Head of caudate nucleus (tissue), 42 donors: ENCODE measurements at regions of chr2 and their contacts with region 1.

Region 1: GRCh38 chr2:42928692-42929545 is 136.5 kb upstream of the HAAO start:
- DNase-seq: no peak

Region 2: DNA sequence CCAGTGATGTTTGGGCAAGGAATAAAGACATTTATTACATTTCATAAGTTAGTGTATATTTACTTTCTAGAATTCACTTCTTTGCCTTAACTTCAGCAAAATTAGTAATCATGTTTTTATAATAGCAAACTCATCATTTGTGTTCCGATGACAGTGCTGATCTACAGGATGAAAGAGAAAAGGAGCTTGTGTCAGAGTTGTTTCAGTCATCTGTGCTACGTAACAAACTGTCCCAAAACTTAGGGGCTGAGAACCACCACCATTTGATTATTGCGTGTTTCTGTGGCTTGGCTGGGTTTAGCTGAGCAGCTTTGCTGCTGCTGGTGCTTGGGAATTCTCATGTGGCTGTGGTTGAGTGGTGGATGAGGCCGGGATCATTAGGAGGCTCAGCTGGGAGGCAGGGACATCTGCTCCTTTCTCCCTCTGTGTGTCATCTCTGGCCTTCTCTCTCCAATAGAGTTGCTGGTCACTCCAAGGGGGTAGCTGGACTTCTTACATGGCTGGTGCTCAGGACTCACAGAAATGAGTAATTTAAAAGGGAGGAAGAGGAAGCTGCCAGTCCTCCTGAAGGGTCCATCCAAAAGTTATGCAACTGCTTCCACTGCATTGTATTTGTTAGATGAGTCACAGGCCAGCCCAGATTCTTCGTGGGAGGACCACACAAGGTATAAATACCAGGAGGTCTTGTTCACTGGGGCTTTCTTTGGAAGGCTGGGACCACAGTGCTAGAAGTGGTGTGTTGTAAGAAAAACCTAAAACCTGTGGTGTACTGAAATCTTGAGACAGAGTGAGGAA is 93.1 kb before region 1 on chr2:
- intact Hi-C with region 1: loop called (anchors 10 kb)
- DNase-seq: peak in 4 of 42 donors; percentile 1 to 42 (median 12)